ENCODE measurements at regions of chr3 and their contacts with region 1.

Region 1: GRCh38 chr3:23805633-23806533 is at the start of gene UBE2E1:
- DNase-seq: peak; percentile 91
- ATAC-seq: peak; percentile 79
- H3K4me3 ChIP-seq: peak within 1 kb of the TSS in 4 of 5 experiments; percentile 57 to 88 (median 70)
- H3K4me3 Mint-ChIP-seq: peak within 1 kb of the TSS; percentile 96
- H3K27ac ChIP-seq: peak within 1 kb of the TSS; percentile 54 to 88
- H3K27ac Mint-ChIP-seq: peak within 1 kb of the TSS; percentile 97
- H3K4me1 ChIP-seq: peaks cover 32 to 36% of the 10 kb centered on the region in 2 donors
- H3K4me1 Mint-ChIP-seq: peaks cover 41% of the 10 kb centered on the region
- H3K27me3 ChIP-seq: no peaks in the 10 kb centered on the region
- H3K27me3 Mint-ChIP-seq: no peaks in the 10 kb centered on the region
- CTCF ChIP-seq: no peak
- total RNA-seq, gene UBE2E1: 63.7 and 68.2 TPM in 2 replicates

Region 2: DNA sequence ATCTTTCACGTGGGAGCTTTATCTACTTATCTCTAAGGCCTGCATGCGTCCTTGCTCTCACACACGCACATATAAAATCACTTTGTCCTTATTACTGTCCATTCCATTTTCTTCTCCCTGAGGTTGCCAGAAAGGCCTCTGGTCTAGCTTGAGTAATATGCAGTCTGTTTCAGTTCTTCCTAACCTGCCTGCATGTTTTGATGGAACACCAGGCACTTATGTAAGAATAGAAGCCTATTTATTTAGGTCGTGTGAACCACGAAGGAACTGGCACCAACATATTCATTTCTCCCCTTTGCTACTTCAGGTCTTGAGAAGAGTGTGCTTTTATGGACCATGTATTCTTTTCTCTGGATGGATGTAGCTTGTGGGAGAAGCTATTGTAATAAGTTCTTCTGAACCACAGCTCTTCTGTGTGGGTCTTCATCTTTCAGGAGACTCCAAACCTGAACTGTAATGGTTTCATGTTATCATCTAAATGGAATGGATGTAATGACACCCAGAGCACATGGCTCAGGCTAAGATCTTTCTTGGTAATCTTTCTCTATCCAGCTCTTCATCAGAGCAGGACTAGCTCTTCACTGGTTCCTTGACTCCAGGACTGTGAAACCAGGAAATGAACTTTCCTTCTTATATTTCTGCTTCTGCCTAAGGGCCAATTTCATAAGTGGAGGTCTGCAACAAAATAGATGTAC is 549.0 kb before region 1 on chr3:
- CTCF ChIA-PET with region 1: no interaction called
- POLR2A ChIA-PET with region 1: interaction called, 11 read pairs
- intact Hi-C with region 1: no loop called
- DNase-seq: no peak
- ATAC-seq: no peak
- H3K4me3 ChIP-seq: no peak overlapping the region
- H3K4me3 Mint-ChIP-seq: no peak overlapping the region
- H3K27ac ChIP-seq: no peak overlapping the region
- H3K27ac Mint-ChIP-seq: no peak overlapping the region
- H3K4me1 ChIP-seq: peaks cover 19 to 22% of the 10 kb centered on the region in 2 donors
- H3K4me1 Mint-ChIP-seq: peaks cover 46% of the 10 kb centered on the region
- H3K27me3 ChIP-seq: no peaks in the 10 kb centered on the region
- H3K27me3 Mint-ChIP-seq: no peaks in the 10 kb centered on the region
- CTCF ChIP-seq: no peak

Region 3: DNA sequence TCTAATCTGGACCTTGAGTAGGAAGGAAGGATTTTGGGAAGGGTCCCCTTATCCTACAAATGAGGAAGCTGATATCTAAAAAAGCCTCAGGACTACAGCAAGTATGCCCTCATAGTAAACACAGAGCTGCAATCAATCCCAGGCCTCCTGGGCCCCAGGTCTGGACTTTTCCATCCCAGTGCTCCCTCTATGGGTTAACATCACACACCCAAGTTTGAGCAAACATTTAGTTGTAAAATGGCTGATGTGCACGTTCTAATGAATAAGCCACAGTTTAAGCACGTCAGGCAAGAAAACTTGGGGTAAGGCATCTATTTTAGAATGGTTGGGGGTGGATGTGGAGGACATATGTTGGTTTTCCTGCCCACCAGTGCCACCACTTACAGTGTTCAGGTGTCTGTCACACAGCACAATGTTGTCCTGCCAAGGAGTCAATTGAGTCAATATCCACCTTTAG is 44.4 kb before region 1 on chr3:
- CTCF ChIA-PET with region 1: no interaction called
- POLR2A ChIA-PET with region 1: no interaction called
- intact Hi-C with region 1: loop called (anchors 2 kb)
- DNase-seq: peak; percentile 37
- ATAC-seq: no peak
- H3K4me3 ChIP-seq: no peak overlapping the region
- H3K4me3 Mint-ChIP-seq: no peak overlapping the region
- H3K27ac ChIP-seq: no peak overlapping the region
- H3K27ac Mint-ChIP-seq: peak overlapping the region; percentile 53
- H3K4me1 ChIP-seq: peaks cover 31 to 33% of the 10 kb centered on the region in 2 donors
- H3K4me1 Mint-ChIP-seq: peaks cover 33% of the 10 kb centered on the region
- H3K27me3 ChIP-seq: no peaks in the 10 kb centered on the region
- H3K27me3 Mint-ChIP-seq: no peaks in the 10 kb centered on the region
- CTCF ChIP-seq: no peak

Region 4: GRCh38 chr3:23859016-23859743 is 53.3 kb after region 1 on chr3:
- CTCF ChIA-PET with region 1: interaction called, 5 read pairs
- POLR2A ChIA-PET with region 1: no interaction called
- intact Hi-C with region 1: loop called (anchors 2 kb)
- DNase-seq: no peak
- ATAC-seq: no peak
- H3K4me3 ChIP-seq: no peak overlapping the region
- H3K4me3 Mint-ChIP-seq: no peak overlapping the region
- H3K27ac ChIP-seq: no peak overlapping the region
- H3K27ac Mint-ChIP-seq: peak overlapping the region; percentile 27
- H3K4me1 ChIP-seq: peaks cover 36 to 40% of the 10 kb centered on the region in 2 donors
- H3K4me1 Mint-ChIP-seq: peaks cover 54% of the 10 kb centered on the region
- H3K27me3 ChIP-seq: no peaks in the 10 kb centered on the region
- H3K27me3 Mint-ChIP-seq: no peaks in the 10 kb centered on the region
- CTCF ChIP-seq: no peak

Region 5: GRCh38 chr3:23945903-23946751 is 140.2 kb after region 1 on chr3:
- CTCF ChIA-PET with region 1: no interaction called
- POLR2A ChIA-PET with region 1: no interaction called
- intact Hi-C with region 1: loop called (anchors 1 kb)
- DNase-seq: peak; percentile 99
- ATAC-seq: peak; percentile 77
- H3K4me3 ChIP-seq: peak overlapping the region; percentile 49 to 88 (median 84)
- H3K4me3 Mint-ChIP-seq: peak overlapping the region; percentile 93
- H3K27ac ChIP-seq: peak overlapping the region; percentile 83
- H3K27ac Mint-ChIP-seq: peak overlapping the region; percentile 92
- H3K4me1 ChIP-seq: peaks cover 30 to 33% of the 10 kb centered on the region in 2 donors
- H3K4me1 Mint-ChIP-seq: peaks cover 48% of the 10 kb centered on the region
- H3K27me3 ChIP-seq: no peaks in the 10 kb centered on the region
- H3K27me3 Mint-ChIP-seq: no peaks in the 10 kb centered on the region
- CTCF ChIP-seq: no peak

Measured in B cell (primary cell).